ENCODE measurements at regions of chr1 and their contacts with region 1.

Region 1: DNA sequence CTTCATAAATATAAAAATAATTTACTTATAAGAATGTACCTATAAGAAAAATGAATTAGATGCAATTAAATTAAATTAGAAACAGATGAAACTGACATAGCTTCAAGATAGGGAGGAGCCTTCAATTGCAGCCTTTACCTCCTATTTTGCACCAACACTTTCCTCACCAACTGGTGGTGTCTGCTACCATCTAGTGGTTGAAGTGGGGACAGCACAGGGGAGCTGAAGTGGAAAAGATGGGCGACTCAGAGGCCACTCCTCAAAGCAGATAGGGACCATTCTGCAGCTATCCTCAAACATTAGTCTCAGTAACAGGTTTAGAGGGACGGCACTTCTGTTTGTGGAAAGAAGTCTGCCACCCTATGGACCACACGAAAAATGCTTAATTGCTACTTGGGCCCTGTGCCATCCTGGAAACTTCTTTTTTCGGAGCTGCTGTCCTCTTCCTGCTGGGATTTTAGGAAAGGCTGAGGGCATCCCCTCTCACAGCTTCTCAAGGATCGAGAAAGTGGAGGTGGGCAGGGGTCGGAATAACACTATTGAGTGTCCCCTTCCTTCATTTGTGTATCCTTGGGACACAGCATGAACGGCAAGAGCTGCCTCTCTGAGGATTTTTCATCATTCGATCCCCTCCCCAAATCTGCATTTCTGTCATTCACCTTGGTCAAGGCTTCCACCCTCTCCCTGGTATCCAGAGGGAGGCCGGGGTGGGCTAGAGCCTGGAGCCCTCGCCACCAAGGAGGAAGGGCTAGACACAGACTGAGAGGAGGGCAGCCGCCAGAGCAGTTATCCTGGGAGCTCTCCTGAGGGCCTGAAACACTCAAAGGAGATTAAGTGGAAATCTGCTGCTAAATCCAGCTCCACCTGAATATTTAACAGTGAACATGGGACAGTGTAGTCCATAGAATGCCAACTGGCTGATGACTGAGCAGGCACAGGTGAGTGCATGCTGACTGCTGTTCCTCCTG is 9.6 kb downstream of the PROK1 start:
- DNase-seq: peak; percentile 87 to 95
- H3K4me3 ChIP-seq: no peak overlapping the region
- CTCF ChIP-seq: peak in 1 of 3 donors; percentile 96
- POLR2A ChIP-seq: no peak

Region 2: GRCh38 chr1:110412576-110412975 is 48.0 kb before region 1 on chr1:
- intact Hi-C with region 1: loop called (anchors 5 kb)
- DNase-seq: peak; percentile 72 to 92
- H3K4me3 ChIP-seq: no peak overlapping the region
- CTCF ChIP-seq: peak in 1 of 3 donors; percentile 46
- POLR2A ChIP-seq: no peak